Psoas muscle (tissue), 8 donors: ENCODE measurements at regions of chr20 and their contacts with region 1.

Region 1: DNA sequence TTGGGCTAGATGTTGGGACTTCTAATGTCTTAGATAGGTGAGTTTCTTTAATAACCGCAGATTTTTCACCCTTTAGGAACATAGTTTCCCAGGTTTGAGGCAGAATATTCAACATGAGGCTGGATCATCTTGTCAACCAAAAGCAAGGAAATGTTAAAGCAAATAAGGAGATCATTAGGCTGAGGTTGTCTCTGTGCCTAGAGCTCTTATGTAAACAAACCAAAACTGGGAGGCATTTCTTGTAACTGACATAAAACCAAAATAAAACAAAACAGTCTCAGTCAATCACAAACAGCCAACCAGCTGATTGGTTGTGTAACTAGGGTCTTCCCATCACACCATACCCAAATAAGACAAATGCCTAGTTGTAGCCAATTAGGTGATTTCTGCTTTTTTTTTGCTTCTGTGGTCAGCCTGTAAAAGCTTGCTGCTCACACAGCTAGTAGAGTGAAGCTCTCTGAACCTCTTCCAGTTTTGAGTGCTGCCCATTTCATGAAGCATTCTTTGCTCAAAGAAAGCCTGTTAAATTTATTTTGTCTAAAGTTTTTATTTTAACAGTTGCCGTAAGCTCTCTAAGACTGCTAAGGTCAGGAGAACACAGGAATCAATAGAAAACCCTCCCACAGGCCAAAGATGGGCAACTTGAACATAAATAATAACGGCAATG is 8.9 kb upstream of the FITM2 start:
- DNase-seq: no peak
- ATAC-seq: no peak
- H3K4me3 ChIP-seq: no peak overlapping the region
- H3K27ac ChIP-seq: no peak overlapping the region
- H3K4me1 ChIP-seq: no peaks in the 10 kb centered on the region
- H3K27me3 ChIP-seq: no peaks in the 10 kb centered on the region
- CTCF ChIP-seq: no peak

Region 2: DNA sequence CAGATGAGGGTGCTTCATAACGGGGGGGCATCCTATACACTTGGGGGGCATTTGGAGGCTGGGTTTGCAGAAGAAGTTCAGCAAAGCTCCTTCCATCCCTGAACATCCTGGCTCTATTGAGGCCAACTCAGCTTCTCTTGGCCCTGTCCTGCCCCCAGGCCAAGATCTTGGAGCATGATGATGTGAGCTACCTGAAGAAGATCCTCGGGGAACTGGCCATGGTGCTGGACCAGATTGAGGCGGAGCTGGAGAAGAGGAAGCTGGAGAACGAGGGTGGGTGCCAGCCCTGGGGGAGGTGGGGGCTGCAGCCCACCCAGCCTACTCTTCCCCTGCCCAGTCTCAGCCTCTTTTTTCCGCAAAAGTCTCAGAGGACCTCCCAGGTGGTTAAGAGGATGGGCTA is 55.6 kb before region 1 on chr20:
- intact Hi-C with region 1: loop called in 1 of 2 experiments (anchors 2 kb)
- DNase-seq: no peak
- ATAC-seq: no peak
- H3K4me3 ChIP-seq: no peak overlapping the region
- H3K27ac ChIP-seq: no peak overlapping the region
- H3K4me1 ChIP-seq: no peaks in the 10 kb centered on the region
- H3K27me3 ChIP-seq: no peaks in the 10 kb centered on the region
- CTCF ChIP-seq: no peak

Region 3: DNA sequence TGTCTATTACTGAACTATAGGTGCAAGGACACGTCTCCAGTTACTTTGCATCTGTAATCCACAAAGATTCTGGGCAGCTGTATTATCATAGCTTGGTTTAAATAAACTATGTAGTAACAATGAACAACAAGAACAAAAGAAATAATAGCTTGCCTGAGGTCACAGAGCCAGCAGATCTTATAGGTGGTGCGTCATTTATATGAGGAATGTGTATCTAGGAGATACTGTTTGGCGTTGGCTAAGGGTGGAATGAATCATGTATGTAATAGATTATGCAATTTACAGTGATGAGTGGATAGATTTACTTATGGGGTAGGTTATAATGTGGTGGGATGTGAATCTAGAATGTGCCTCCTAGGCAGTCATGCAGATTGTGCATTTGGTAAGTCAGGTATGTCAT is 78.4 kb after region 1 on chr20:
- intact Hi-C with region 1: no loop called
- DNase-seq: no peak
- ATAC-seq: no peak
- H3K4me3 ChIP-seq: no peak overlapping the region
- H3K27ac ChIP-seq: no peak overlapping the region
- H3K4me1 ChIP-seq: no peaks in the 10 kb centered on the region
- H3K27me3 ChIP-seq: peaks cover 0 to 9% (median 5%) of the 10 kb centered on the region in 3 donors
- CTCF ChIP-seq: no peak